ENCODE measurements at regions of chr18 and their contacts with region 1.

Region 1: GRCh38 chr18:76709659-76710645 is 112.4 kb upstream of the ZNF236 start:
- DNase-seq: peak; percentile 71
- ATAC-seq: peak; percentile 86
- H3K4me3 Mint-ChIP-seq: no peak overlapping the region
- H3K27ac Mint-ChIP-seq: peak overlapping the region; percentile 30
- H3K4me1 Mint-ChIP-seq: peaks cover 2% of the 10 kb centered on the region
- H3K27me3 Mint-ChIP-seq: peaks cover 6% of the 10 kb centered on the region

Region 2: DNA sequence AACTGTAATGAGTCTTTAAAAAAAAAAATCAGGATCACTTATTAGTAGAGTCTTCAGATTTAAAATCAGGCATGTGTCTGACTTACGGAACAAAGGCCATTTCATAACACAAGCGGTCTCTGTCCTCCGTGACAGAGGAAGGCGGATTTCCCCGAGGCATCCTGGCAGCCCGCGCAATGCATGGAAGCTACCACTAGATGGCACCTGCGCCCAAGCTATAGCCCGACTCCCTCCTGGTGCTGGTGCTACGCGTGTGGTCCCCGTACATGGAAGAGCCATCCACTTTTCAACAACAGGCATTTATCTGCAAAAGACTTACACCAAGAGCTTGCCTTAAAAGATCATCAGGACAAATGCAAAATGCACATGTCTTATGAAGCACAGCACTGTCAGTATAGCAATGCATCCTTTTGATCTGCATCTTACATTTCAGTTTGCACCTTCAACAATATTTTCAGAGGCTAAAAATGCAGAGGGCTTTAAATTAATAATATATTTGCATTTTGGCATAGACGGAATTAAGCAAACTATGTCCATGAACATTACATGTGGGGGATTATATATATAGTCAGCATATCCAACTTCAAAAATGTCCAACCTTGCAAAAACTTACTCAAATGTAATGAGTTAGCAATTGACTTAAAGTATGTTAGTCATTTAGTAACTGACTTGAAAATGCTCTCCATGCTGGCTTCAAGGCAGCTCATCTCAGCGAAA is 310.9 kb before region 1 on chr18:
- CTCF ChIA-PET with region 1: interaction called, 36 read pairs
- DNase-seq: peak; percentile 77
- ATAC-seq: peak; percentile 76
- H3K4me3 Mint-ChIP-seq: no peak overlapping the region
- H3K27ac Mint-ChIP-seq: no peak overlapping the region
- H3K4me1 Mint-ChIP-seq: peaks cover 2% of the 10 kb centered on the region
- H3K27me3 Mint-ChIP-seq: peaks cover 25% of the 10 kb centered on the region

Region 3: DNA sequence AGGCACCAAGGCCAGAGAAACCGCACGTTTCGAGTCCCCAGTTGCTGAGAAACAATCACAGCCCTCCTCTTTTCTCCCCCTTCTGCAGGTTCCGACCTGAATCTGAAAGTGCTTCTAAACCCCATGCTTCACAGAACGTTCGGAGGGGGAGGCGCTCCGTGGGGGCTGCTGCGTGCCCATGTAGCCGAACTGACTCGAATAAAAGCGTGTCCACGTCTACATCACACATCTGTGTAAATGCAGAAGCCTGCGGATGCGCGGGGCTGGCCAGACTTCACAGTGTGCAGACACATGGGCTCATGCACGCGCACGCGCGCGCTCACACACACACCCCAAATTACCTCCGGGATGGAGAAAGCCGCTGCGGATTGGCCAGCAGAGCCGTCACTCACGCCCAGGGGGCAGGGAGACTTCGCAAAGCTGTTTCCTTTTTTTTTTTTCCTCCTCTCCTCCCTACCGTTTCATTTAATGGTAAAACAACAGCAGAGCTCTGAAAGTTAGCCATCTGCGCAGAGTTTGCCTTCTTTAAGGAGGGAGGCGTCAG is 217.2 kb before region 1 on chr18:
- CTCF ChIA-PET with region 1: interaction called, 10 read pairs
- DNase-seq: peak; percentile 98
- ATAC-seq: peak; percentile 95
- H3K4me3 Mint-ChIP-seq: peak overlapping the region; percentile 76
- H3K27ac Mint-ChIP-seq: peak overlapping the region; percentile 62
- H3K4me1 Mint-ChIP-seq: peaks cover 26% of the 10 kb centered on the region
- H3K27me3 Mint-ChIP-seq: peaks cover 77% of the 10 kb centered on the region

Region 4: DNA sequence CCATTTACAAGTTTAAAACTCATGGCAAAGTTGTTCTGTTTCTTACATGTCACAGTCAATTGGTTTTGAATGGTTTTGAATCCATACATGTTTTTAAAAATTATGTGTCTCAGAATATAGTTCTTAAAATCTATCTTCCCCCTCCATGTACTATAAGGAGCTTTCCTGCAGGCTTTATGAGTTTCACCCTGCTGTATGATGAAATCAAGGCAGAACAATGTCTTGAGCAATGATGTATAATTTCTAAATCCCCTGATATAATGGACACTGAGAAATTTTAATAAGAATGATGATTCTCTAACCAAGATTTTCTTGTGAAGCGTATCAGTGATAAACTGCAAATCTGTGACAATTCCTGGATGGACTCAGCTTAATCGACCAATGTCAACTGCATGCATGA is 204.3 kb before region 1 on chr18:
- CTCF ChIA-PET with region 1: no interaction called
- DNase-seq: no peak
- ATAC-seq: no peak
- H3K4me3 Mint-ChIP-seq: no peak overlapping the region
- H3K27ac Mint-ChIP-seq: no peak overlapping the region
- H3K4me1 Mint-ChIP-seq: no peaks in the 10 kb centered on the region
- H3K27me3 Mint-ChIP-seq: peaks cover 8% of the 10 kb centered on the region

Region 5: DNA sequence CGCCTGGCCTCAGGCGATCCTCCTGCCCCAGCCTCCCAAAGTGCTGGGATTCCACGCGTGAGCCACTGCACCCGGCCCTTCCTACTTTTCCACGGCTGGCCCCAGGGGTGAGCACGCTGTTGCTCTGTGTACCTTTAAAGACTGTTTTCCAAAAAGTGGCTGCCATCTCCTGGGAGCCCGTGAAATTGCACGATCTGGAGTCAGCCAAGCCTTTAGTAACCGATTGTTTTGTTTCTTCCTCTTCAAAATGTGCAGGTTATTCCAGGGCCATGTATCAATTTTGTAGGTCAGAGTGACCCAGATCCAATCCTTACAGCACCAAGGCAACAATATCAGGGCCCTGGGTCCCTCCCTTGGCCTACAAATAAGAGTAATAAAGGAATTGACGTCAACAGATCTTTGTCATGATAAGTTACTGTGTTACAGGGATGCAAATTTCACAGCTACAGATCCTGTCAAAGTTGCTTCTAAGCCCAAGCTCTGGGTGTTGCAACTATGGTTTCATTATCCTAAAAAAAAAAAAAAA is 23.2 kb before region 1 on chr18:
- CTCF ChIA-PET with region 1: interaction called, 14 read pairs
- DNase-seq: peak; percentile 43
- ATAC-seq: peak; percentile 69
- H3K4me3 Mint-ChIP-seq: no peak overlapping the region
- H3K27ac Mint-ChIP-seq: peak overlapping the region; percentile 73
- H3K4me1 Mint-ChIP-seq: peaks cover 18% of the 10 kb centered on the region
- H3K27me3 Mint-ChIP-seq: peaks cover 54% of the 10 kb centered on the region

Region 6: DNA sequence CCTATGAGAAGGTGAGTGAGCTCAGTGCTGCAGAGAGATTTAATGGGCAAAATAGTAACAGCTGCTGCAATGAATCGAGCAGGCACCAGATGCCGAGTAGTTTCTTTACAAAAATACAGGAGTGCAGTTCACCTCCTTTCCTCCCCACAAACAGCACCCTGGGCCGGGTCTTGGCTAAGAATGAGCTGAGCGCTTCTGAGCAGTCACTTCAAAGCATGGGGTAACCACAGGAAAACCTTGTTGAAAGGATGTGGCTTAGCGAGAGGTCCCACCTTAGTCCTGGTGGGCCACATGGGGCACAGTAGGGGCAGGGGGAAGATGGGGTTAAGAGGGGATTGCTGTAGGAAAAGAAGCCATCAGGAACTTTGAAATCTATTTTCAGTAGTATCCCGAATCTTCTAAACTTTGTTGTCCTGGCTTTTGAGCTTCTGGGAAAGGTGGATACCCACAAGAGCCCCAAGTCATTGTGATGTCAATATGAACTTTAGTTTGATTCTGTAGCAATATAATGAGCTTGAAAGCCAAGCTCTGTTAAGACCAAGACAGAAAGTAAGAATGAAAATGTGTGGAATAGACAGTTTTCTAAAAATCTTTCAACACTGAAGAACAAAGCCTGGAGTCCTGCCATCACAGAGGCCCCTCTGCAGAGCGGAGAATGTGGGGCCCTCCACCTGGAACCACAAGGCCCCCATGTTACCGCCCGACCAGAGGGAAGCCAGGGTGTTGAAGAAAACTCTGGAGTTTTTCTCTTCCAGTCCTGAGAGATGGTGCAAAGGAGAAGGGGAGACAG is 11.4 kb after region 1 on chr18:
- CTCF ChIA-PET with region 1: interaction called, 41 read pairs
- DNase-seq: peak; percentile 93
- ATAC-seq: peak; percentile 96
- H3K4me3 Mint-ChIP-seq: peak overlapping the region; percentile 65
- H3K27ac Mint-ChIP-seq: peak overlapping the region; percentile 93
- H3K4me1 Mint-ChIP-seq: peaks cover 42% of the 10 kb centered on the region
- H3K27me3 Mint-ChIP-seq: peaks cover 23% of the 10 kb centered on the region

Measured in activated CD8-positive, alpha-beta memory T cell treated with anti-CD3 and anti-CD28 coated beads, Interleukin-2, amount 10 ng/mL, durations not matched to agents 7 days and 5 days (primary cell).